ENCODE measurements at regions of chr4 and their contacts with region 1.

Region 1: DNA sequence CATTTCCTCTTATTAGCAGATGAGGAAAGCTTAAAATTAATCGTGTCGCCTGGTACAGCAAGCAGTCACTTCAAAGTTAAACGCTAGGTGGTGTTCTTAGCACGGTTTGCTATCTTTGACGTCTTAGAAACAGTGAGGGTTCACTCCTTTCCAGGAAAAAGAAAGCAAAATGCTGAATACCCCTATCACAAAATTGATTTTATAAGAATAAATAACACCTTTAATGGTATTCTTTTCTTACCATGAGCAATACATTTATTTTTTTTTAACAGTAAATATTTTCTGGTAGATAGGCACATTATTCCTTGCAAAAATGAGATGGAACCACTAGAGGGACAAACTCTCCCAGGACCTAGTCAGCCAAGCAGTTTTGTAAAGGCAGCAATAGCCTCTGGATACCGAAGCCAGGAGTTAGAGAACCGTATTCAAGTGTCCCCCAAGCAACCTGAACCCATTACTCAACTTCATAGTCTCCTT is 153.9 kb downstream of the KDR start:
- DNase-seq: peak; percentile 75
- ATAC-seq: peak; percentile 93
- H3K4me3 ChIP-seq: no peak overlapping the region
- H3K27ac ChIP-seq: no peak overlapping the region
- H3K4me1 ChIP-seq: no peaks in the 10 kb centered on the region
- H3K27me3 ChIP-seq: peaks cover 4% of the 10 kb centered on the region; the same call in 1 of the 2 replicates
- CTCF ChIP-seq: peak; percentile 98

Region 2: DNA sequence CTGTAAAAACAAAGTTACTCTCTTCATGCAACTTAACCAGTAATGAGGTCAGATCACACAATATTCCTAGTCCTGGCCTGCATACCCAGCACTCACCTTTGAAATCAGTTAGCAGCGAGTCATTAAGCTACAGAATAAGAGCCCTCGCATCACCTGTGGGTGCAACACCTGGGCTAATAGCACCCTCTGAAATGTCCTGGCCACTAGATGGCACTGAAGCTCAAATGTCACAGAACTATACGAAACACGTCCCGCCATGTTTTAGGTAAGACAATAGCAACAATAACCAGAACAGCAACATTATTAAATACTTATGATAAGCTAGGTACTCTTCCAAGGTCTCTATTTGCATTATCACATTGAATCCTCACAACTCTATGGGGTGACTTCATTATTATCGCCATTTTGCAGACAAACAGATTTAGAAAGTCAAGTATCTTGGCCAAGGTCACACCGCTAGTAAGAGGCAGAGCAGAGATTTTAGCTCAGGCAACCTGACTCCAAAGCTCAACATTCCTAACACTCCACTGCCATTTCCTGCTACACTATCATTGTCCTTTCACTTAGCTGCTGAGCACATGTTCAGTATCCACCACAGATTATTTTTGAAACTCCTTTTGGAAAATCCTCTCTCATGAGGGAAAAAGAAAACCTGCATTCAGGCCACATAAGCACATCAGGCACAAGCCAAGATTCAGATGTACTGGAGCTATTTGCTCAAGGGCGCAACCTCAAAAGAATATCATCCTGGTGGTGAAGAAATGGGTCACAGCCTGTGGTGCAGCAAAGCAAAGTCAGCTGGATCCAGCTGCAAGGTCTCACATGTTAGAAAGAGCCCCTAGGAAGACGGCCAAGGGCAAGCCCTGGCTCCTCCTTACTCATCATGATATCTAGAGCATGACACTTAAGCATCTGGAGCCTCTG is 213.3 kb after region 1 on chr4:
- CTCF ChIA-PET with region 1: interaction called, 13 read pairs
- POLR2A ChIA-PET with region 1: no interaction called
- intact Hi-C with region 1: no loop called
- DNase-seq: peak; percentile 76
- ATAC-seq: peak; percentile 38
- H3K4me3 ChIP-seq: peak overlapping the region; percentile 27
- H3K27ac ChIP-seq: peak overlapping the region; percentile 76
- H3K4me1 ChIP-seq: peaks cover 33% of the 10 kb centered on the region
- H3K27me3 ChIP-seq: no peaks in the 10 kb centered on the region
- CTCF ChIP-seq: peak; percentile 89

Region 3: DNA sequence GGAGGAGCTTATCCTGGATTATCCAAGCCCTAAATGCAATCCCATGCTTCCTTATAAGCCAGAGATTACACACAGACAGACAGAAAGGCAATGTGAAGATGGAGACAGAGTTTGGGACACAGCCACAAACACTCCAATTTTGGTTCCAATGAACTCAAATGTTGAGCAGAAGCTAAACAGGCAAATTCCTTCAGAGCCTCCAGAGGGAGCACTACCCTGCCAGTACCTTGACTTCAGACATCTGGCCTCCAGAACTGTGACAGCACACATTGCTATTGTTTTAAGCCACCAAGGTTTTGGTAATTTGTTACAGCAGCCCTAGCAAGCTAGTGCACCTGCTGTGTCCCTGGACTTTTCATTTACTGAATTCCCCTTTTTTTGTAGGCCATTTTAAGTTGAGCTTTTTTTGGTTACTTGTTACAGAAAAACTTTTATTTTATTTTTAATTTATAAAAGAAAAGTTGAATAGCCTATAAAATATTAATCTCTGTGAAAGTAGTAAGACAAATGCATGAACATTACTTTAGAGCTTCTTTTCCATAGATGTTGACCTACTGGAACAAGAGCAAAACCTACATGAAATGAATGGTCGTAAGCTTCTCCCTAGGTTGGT is 341.1 kb after region 1 on chr4:
- CTCF ChIA-PET with region 1: interaction called, 4 read pairs
- POLR2A ChIA-PET with region 1: no interaction called
- intact Hi-C with region 1: loop called (anchors 2 kb)
- DNase-seq: peak; percentile 77
- ATAC-seq: peak; percentile 90
- H3K4me3 ChIP-seq: no peak overlapping the region
- H3K27ac ChIP-seq: no peak overlapping the region
- H3K4me1 ChIP-seq: no peaks in the 10 kb centered on the region
- H3K27me3 ChIP-seq: no peaks in the 10 kb centered on the region
- CTCF ChIP-seq: peak; percentile 91

Region 4: DNA sequence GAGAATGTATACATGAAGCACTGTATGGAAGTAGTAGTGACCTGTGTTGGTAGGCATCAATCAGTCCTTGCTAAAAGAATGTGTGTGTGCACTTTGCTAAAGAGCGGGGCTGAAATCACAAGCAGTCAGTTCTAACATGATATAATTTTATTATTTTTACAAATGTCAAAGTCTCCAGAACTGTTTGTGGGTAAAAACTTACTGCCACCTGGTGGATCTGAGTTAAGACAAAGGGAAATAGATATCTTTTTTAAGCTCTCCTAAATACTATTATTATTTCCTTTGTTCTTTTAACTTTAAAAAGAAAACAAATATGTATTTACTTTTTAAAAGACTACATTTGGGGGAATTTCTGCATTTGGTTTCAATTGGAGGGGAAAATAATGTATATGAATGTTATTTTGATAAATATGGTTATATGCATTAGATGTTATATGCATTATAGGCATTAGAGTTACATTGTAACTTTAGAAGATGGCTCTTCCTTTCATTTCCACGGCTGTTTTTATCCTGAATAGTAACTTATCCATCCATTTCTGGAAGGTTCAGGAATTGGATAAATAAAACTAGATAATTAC is 583.0 kb after region 1 on chr4:
- CTCF ChIA-PET with region 1: interaction called, 3 read pairs
- POLR2A ChIA-PET with region 1: no interaction called
- intact Hi-C with region 1: loop called (anchors 1 kb)
- DNase-seq: peak; percentile 71
- ATAC-seq: 0 out of 2 replicates have a peak, but pooled peaks have one; percentile 4
- H3K4me3 ChIP-seq: no peak overlapping the region
- H3K27ac ChIP-seq: no peak overlapping the region
- H3K4me1 ChIP-seq: peaks cover 26% of the 10 kb centered on the region
- H3K27me3 ChIP-seq: no peaks in the 10 kb centered on the region
- CTCF ChIP-seq: peak; percentile 83

Region 5: GRCh38 chr4:55635741-55636655 is 664.5 kb after region 1 on chr4 and contains the start of gene NMU:
- CTCF ChIA-PET with region 1: interaction called, 3 read pairs
- POLR2A ChIA-PET with region 1: no interaction called
- intact Hi-C with region 1: loop called (anchors 5 kb)
- DNase-seq: peak; percentile 79
- ATAC-seq: peak; percentile 84
- H3K4me3 ChIP-seq: peak within 1 kb of the TSS; percentile 69
- H3K27ac ChIP-seq: no peak within 1 kb of the TSS
- H3K4me1 ChIP-seq: peaks cover 13% of the 10 kb centered on the region
- H3K27me3 ChIP-seq: no peaks in the 10 kb centered on the region
- CTCF ChIP-seq: peak; percentile 43; the same call in 1 of the 2 replicates
- total RNA-seq, gene NMU: 28.5 and 40.2 TPM in 2 replicates

Region 6: GRCh38 chr4:55736605-55737183 is 765.2 kb after region 1 on chr4:
- CTCF ChIA-PET with region 1: interaction called, 4 read pairs
- POLR2A ChIA-PET with region 1: no interaction called
- intact Hi-C with region 1: loop called (anchors 5 kb)
- DNase-seq: peak; percentile 64
- ATAC-seq: no peak
- H3K4me3 ChIP-seq: no peak overlapping the region
- H3K27ac ChIP-seq: no peak overlapping the region
- H3K4me1 ChIP-seq: peaks cover 15% of the 10 kb centered on the region
- H3K27me3 ChIP-seq: no peaks in the 10 kb centered on the region
- CTCF ChIP-seq: peak; percentile 77

Measured in PC-3 (cell line).